HEK293 (cell line): ENCODE measurements at regions of chr2 and their contacts with region 1.

Region 1: GRCh38 chr2:224008702-224009261 is 30.3 kb downstream of the SERPINE2 start:
- H3K4me3 ChIP-seq: no peak overlapping the region
- H3K27ac ChIP-seq: no peak overlapping the region
- H3K4me1 ChIP-seq: 0 out of 2 replicates have a peak, but pooled peaks cover 2% of the 10 kb centered on the region
- CTCF ChIP-seq: no peak

Region 2: DNA sequence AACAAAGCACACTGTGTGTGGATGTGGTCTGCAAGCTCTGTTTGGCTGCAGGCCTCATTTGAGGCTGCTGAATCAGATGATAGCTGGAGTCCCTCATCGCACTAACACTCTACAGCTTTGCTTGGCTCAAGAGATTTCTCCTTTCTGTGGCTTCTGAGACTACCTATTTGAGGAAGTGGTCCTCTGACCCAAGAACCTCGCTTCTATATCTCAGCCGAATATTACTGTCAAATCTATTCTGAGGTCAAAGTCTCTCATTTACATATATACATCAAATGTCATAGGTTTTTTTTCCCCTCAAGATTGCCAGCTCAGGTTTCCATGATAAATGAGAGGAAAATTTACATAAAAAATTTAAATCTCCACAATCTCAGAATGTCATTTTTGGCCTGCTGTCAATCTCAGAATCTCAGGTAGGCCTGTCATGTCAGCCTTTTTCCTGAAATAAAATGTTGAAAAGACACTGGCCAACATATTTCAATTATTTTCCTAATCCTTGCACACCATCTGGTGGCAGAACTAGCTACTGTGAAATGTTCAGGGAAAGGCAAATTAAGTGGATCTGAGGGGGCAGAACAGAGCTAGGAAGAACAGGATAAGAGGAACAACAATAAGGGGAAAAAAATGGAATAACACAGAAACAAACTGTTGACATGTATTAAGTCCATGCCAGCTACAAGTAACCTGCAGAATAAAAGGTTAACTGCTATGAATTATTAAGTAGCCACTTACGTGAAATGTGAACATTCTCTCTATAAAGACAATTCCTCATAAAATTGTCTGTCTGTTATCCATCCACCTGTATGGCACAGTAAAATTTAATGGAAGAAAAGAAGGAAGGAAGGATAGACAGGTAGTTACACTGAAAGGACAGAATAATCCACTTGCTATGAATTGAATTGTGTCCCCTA is 210.7 kb before region 1 on chr2:
- CTCF ChIA-PET with region 1: no interaction called
- POLR2A ChIA-PET with region 1: no interaction called
- H3K4me3 ChIP-seq: no peak overlapping the region
- H3K27ac ChIP-seq: no peak overlapping the region
- H3K4me1 ChIP-seq: no peaks in the 10 kb centered on the region
- CTCF ChIP-seq: peak; percentile 86

Region 3: DNA sequence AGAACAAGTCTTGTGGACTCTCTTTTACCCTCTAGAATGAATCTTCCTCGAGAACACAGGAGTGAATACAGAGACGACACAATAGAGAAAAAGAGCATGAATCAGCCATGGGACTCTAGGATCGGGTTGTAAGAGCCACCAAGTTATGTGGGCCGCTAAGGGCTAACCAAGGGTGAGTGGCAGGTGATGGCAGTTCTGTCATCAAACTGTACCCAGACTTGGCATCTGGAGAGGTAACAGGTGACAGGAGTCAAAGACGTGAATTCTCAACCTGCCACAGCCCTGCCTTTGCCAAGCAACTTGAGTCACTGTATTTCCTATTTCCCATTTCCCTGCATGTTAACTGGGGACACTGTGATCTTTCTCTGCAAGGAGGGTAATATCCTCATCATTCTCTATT is 19.1 kb after region 1 on chr2:
- CTCF ChIA-PET with region 1: no interaction called
- POLR2A ChIA-PET with region 1: no interaction called
- H3K4me3 ChIP-seq: no peak overlapping the region
- H3K27ac ChIP-seq: no peak overlapping the region
- H3K4me1 ChIP-seq: no peaks in the 10 kb centered on the region
- CTCF ChIP-seq: no peak

Region 4: DNA sequence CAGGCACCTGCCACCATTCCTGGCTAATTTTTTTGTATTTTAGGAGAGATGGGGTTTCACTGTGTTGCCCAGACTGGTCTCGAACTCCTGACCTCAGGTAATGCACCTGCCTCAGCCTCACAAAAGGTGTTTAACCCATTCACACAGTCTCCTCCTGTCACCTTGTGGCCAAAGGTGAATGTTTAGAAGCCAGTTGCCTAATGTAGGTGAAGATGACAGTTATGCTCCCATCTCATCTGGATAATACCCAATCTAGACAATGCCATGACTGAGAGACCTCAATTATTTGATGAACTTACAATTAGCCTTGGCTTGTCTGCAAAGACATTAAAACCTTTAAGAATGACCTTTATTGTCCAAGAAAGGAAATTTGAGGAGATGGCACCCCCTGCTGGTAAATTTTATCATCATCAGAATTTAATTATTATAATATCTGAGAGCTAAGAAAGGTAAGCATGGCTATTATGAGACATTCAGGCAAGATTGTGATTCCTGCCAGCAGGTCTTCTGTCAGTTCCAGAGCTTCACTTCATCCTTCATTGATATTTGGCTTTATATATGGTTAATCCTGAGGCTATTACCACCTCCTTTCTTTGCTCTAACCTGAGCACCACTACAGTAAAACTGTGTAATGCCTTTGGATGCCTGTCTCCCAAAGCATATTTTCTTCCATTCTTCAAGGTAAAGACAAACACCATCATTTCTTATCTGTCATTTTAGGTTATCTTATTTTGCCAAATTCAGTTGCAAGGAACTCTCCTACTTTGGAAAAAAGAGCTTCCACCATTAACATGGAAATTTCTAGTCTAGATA is 275.6 kb after region 1 on chr2:
- CTCF ChIA-PET with region 1: interaction called, 12 read pairs
- POLR2A ChIA-PET with region 1: no interaction called
- H3K4me3 ChIP-seq: no peak overlapping the region
- H3K27ac ChIP-seq: no peak overlapping the region
- H3K4me1 ChIP-seq: no peaks in the 10 kb centered on the region
- CTCF ChIP-seq: peak; percentile 77